ENCODE measurements at regions of chr10 and their contacts with region 1.

Region 1: DNA sequence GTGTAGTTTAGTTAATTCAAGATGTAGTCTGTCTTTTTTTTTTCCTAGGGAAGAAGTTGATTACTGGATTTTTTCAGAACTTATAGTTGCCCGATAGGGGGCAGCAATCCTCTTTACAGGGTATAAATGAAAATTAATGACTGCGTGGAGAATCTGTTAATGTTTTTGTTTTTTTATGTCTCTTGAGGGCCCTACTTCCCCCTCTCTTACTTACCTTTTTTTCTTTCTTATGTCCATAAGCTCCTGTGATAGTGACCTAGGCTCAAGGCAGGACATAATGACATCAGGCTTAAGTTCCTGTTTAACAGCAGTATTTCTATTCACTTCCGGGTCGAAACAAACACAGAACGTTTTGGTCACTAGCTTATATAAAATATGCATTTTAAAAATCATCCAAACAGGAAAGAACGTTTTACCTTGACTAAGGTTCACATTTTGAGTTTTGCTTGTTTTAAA is 18.8 kb downstream of the CDC123 start:
- DNase-seq: peak in 1 of 2 experiments; percentile 7
- H3K4me3 ChIP-seq: no peak overlapping the region
- H3K27ac ChIP-seq: no peak overlapping the region
- H3K4me1 ChIP-seq: no peaks in the 10 kb centered on the region
- H3K27me3 ChIP-seq: no peaks in the 10 kb centered on the region
- CTCF ChIP-seq: peak; percentile 76

Region 2: DNA sequence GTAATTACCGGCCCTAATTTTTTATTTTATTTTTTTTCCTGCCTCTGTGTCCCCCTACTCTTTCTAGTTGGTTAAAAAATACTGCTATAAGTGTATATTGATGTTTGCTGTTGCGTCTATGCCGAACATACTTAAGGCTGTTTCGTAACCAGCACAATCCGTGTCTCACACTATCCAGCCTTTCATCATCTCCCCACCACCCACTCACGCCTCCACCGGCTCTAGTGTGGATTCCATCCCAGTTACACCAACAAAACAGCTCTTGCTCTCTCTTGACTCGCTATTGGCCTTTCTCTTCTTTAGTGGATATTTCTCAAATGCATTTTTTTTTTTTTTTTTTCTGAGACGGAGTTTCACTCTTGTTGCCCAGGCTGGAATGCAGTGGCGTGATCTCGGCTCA is 64.5 kb after region 1 on chr10:
- CTCF ChIA-PET with region 1: no interaction called
- POLR2A ChIA-PET with region 1: no interaction called
- intact Hi-C with region 1: no loop called
- DNase-seq: no peak
- H3K4me3 ChIP-seq: no peak overlapping the region
- H3K27ac ChIP-seq: no peak overlapping the region
- H3K4me1 ChIP-seq: no peaks in the 10 kb centered on the region
- H3K27me3 ChIP-seq: no peaks in the 10 kb centered on the region
- CTCF ChIP-seq: no peak

Region 3: DNA sequence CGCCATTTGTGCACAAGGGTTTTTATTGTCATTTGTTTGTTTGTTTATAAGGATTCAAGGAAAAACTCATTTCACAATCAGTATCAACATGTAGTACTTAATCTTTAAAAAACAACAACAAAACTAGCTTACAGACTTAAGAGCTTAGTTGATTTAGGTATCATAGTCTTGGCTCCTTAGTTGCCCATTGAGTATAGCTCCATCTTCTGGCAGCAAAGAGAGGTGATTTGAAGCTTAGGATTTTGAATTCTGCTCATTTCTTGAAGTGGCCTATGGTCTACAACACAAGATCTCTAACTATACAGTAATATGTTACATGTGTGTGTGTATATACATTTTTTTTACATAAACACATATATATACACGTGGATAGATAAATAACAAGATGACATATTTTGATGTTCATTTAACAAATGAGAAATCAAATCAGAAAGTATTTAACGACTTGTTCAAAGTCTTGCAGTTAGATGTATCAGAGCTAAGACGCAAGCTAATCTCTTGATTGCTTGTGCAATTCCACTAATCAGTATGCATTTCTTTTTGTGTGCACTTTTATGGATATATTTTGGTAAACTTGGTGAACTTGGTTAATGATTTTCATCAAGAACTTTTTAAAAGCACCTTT is 441.8 kb after region 1 on chr10:
- CTCF ChIA-PET with region 1: no interaction called
- POLR2A ChIA-PET with region 1: no interaction called
- intact Hi-C with region 1: loop called (anchors 5 kb)
- DNase-seq: peak in 1 of 2 experiments; percentile 44
- H3K4me3 ChIP-seq: no peak overlapping the region
- H3K27ac ChIP-seq: no peak overlapping the region
- H3K4me1 ChIP-seq: no peaks in the 10 kb centered on the region
- H3K27me3 ChIP-seq: no peaks in the 10 kb centered on the region
- CTCF ChIP-seq: peak; percentile 76

Region 4: GRCh38 chr10:12710594-12711349 is 496.0 kb after region 1 on chr10:
- CTCF ChIA-PET with region 1: no interaction called
- POLR2A ChIA-PET with region 1: no interaction called
- intact Hi-C with region 1: loop called (anchors 2 kb)
- DNase-seq: peak; percentile 67 to 76
- H3K4me3 ChIP-seq: no peak overlapping the region
- H3K27ac ChIP-seq: peak overlapping the region; percentile 93
- H3K4me1 ChIP-seq: peaks cover 58% of the 10 kb centered on the region
- H3K27me3 ChIP-seq: no peaks in the 10 kb centered on the region
- CTCF ChIP-seq: peak; percentile 88

Region 5: DNA sequence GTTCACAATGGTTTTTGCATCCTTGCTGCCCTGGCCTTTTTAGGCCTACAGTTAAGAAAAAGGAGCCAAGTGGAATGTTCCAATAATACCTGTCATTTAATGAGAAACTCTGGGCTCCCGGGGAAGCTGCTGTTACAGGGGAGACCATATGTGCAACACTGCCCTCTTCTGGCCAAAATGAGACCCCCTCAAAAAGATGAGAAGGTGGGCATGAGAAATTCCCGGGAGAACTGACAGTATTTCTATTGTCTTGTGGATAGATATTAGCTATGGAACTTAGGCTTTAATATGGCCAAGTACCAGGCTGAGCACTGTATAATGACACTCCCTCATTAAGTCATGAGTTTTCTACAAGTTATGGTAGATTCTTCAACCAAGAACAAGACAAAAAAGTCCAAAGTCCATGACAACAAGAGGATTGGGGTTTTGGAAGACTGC is 687.4 kb after region 1 on chr10:
- CTCF ChIA-PET with region 1: interaction called, 3 read pairs
- POLR2A ChIA-PET with region 1: no interaction called
- intact Hi-C with region 1: loop called (anchors 1 kb)
- DNase-seq: peak in 1 of 2 experiments; percentile 36
- H3K4me3 ChIP-seq: no peak overlapping the region
- H3K27ac ChIP-seq: no peak overlapping the region
- H3K4me1 ChIP-seq: no peaks in the 10 kb centered on the region
- H3K27me3 ChIP-seq: peaks cover 33% of the 10 kb centered on the region
- CTCF ChIP-seq: peak; percentile 82

Region 6: GRCh38 chr10:13074561-13075451 is 860.0 kb after region 1 on chr10:
- CTCF ChIA-PET with region 1: no interaction called
- POLR2A ChIA-PET with region 1: no interaction called
- intact Hi-C with region 1: loop called (anchors 2 kb)
- DNase-seq: peak; percentile 37 to 64
- H3K4me3 ChIP-seq: no peak overlapping the region
- H3K27ac ChIP-seq: no peak overlapping the region
- H3K4me1 ChIP-seq: no peaks in the 10 kb centered on the region
- H3K27me3 ChIP-seq: no peaks in the 10 kb centered on the region
- CTCF ChIP-seq: peak; percentile 81

Measured in PC-9 (cell line).